ENCODE measurements at regions of chr15 and their contacts with region 1.

Region 1: GRCh38 chr15:92917606-92918407 is 17.7 kb downstream of the CHD2 start:
- DNase-seq: peak; percentile 97

Region 2: DNA sequence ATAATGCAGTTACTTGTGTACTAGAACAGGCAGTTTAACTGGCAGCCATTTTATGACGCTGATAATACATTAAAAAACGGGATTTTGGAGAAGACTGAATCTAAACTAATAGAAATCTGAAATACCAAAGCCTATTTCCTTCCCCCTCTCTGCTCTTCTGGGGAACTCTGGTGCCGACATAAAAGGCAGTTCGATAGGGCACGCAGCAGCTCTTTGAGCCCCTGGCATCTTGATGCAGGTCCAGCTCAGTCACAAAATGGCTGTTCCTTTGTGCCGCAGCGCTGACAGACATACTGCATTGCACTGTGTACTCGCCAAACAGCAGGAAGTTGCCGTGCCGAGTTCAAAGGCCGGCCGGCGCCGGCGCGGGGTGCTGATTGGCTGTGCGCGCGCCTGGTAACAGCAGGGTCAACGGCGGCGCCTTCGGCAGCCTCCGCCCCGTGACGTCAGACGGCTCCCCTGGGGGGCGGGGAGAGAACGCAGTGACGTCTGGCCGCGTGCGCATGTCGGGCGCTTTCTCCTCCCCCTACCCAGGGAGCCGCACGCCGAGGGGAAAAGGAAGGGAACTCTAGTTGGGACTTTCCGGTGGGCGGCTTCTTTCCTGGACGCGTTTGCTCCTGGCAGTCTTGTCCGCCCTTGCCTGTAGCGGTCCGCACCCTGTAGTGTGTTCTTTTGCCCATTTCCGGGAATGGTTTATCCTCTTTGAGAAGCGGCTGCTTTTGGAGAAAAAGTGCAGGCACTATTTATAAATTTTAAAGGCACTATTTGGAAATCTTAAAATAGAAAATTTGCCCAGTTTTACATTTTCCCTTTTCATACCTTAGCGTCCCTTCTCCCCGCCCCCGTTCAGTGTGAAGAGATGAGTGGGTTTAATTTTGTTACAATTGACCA is 13.6 kb before region 1 on chr15:
- intact Hi-C with region 1: loop called in 1 of 2 experiments (anchors 1 kb)
- DNase-seq: peak; percentile 100

Region 3: DNA sequence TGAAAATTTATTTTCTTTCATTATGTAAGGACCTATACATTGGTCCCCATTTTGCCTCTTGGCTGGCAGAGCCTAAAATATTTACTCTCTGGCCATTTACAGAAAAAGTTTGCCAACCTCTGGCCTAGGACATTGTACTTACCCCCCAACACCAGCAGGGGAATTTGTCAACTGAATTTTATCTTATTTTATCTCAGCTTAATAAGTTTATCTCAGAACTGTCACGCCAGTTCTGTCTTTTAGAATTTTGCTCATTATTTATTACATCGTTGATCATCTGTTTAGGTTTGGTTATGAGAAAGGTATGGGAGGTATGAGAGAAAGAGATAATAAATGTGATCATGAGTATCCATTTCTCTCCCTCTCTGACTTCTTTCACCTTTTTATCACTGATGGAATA is 20.6 kb after region 1 on chr15:
- intact Hi-C with region 1: no loop called
- DNase-seq: no peak